ENCODE measurements at regions of chr1 and their contacts with region 1.

Region 1: DNA sequence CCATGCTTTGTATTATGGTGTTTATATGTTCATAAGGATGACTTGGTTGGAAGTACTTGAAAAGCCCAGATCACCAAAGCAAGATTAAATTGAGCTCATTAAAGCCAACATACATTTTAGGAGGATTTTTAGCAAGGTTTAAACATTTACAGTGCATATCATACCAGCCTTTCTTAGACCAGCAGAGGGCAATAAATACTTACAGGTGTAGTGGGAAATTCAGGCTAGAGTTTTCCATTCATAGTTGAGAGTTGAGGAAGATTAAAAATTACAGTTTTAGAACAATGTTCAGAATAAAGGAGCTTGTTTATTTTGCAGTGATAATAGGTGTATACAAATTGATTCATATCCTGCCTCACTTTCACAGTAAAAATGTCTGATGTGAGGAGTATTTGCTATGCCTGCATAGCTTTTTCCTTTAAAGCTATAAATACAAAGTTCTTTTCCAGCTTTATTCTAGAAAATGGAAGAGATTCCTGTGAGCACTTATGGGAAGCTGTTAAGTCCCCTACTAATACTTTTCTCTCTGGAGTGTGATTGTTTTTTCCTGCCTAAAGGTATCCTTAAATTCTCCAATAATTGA is 35.3 kb downstream of the DTL start:
- DNase-seq: peak in 4 of 5 donors; percentile 49 to 55 (median 52)
- H3K4me3 ChIP-seq: no peak overlapping the region
- H3K4me3 Mint-ChIP-seq: no peak overlapping the region
- H3K27ac ChIP-seq: no peak overlapping the region
- H3K27ac Mint-ChIP-seq: no peak overlapping the region
- H3K4me1 ChIP-seq: no peaks in the 10 kb centered on the region
- H3K4me1 Mint-ChIP-seq: peaks cover 0 to 3% (median 1%) of the 10 kb centered on the region in 4 donors
- H3K27me3 ChIP-seq: no peaks in the 10 kb centered on the region
- H3K27me3 Mint-ChIP-seq: no peaks in the 10 kb centered on the region

Region 2: GRCh38 chr1:211680752-211681327 is 390.0 kb before region 1 on chr1:
- CTCF ChIA-PET with region 1: interaction called, 22 read pairs
- POLR2A ChIA-PET with region 1: interaction called, 4 read pairs
- intact Hi-C with region 1: loop called (anchors 1 kb)
- DNase-seq: peak; percentile 76 to 83 (median 82)
- H3K4me3 ChIP-seq: no peak overlapping the region
- H3K4me3 Mint-ChIP-seq: peak overlapping the region in 4 of 8 donors; percentile 0 to 56 (median 17)
- H3K27ac ChIP-seq: peak overlapping the region; percentile 61
- H3K27ac Mint-ChIP-seq: peak overlapping the region; percentile 77 to 98 (median 92)
- H3K4me1 ChIP-seq: peaks cover 15% of the 10 kb centered on the region
- H3K4me1 Mint-ChIP-seq: peaks cover 9 to 26% (median 12%) of the 10 kb centered on the region in 4 donors
- H3K27me3 ChIP-seq: no peaks in the 10 kb centered on the region
- H3K27me3 Mint-ChIP-seq: no peaks in the 10 kb centered on the region

Region 3: DNA sequence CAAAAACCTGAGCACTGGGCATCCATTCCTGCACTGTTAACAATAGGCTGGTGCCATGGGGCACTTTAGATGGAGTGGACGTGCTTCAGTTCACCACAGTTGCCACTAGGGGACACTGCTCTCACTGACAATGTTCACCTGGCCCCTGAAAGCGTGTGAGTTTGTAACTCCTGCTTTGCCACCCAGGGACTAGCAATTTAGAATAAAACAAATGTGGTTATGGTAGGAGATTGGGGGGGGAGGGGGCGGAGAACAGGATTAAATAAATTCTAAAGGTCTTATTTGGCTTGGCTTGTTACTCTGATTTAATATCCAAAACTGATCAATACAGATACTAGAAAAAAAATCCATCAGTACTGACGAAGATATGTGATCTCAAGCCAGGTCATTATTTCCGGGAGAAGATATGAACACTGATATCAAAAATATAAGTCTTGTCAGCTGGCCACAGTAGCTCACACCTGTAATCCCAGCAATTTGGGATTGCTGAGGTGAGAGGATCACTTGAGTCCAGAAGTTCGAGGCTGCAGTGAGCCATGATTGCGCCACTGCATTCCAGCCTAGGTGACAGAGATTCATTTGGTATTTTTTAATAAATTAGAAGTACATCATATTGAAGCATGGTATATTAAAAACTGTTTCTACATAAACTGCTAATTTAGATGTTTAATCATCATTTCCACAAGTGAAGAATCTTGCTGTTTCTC is 58.6 kb before region 1 on chr1:
- CTCF ChIA-PET with region 1: interaction called, 11 read pairs
- POLR2A ChIA-PET with region 1: interaction called, 3 read pairs
- intact Hi-C with region 1: no loop called
- DNase-seq: peak; percentile 42 to 66 (median 53)
- H3K4me3 ChIP-seq: no peak overlapping the region
- H3K4me3 Mint-ChIP-seq: no peak overlapping the region
- H3K27ac ChIP-seq: no peak overlapping the region
- H3K27ac Mint-ChIP-seq: peak overlapping the region in 1 of 7 donors; percentile 3
- H3K4me1 ChIP-seq: no peaks in the 10 kb centered on the region
- H3K4me1 Mint-ChIP-seq: peaks cover 0 to 7% (median 4%) of the 10 kb centered on the region in 4 donors
- H3K27me3 ChIP-seq: no peaks in the 10 kb centered on the region
- H3K27me3 Mint-ChIP-seq: no peaks in the 10 kb centered on the region

Region 4: DNA sequence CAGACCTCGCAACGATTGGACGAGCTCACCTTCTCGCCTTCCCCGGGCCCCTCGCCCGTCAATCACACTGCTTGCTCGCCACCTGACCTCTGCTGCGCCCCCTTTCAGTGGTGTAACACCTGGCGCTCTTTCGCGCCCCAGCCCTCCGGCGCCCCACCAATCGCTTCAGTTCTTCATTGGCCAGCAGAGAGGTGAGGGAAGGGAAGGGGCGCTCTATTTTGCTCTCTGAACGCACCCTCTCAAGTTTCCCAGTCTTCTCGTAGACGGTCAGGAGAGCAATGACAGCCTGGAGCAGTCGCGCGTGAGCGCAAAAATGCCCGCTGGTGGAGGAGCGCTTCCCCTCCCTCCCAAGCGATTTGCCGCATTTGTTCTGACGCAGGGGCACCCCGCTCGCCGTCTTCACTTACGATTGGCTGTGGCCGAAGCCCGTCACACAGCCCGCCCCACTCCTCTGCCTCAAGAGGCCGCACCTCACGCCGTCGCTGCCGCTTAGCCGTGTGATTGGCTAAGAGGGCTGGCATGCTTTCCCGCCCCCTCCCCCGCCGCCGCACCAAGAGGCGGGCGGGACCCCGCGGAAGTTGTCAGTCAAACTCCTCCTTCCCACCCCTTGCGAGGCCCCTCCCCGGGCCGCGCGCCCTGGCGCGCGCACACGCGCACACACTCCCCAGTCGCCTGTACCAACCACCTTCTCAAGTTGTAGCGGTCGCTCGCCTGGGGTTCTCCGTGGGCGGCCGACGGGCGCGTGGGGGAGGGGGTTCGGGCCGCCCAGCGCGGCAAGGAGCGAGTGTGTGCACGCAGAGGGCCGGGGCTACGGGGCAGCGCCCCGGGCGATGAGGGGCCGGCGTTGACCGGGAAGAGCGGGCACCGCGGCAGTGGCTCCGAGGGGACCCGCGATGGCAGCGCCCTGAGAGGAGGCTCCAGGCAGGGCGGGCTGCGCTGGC is 214.2 kb after region 1 on chr1 and contains the start of gene PPP2R5A:
- CTCF ChIA-PET with region 1: interaction called, 162 read pairs
- POLR2A ChIA-PET with region 1: interaction called, 21 read pairs
- intact Hi-C with region 1: no loop called
- DNase-seq: peak; percentile 98 to 99 (median 99)
- H3K4me3 ChIP-seq: peak within 1 kb of the TSS; percentile 85 to 99
- H3K4me3 Mint-ChIP-seq: peak within 1 kb of the TSS; percentile 99 to 100 (median 100)
- H3K27ac ChIP-seq: peak within 1 kb of the TSS; percentile 92
- H3K27ac Mint-ChIP-seq: peak within 1 kb of the TSS; percentile 94 to 99 (median 99)
- H3K4me1 ChIP-seq: peaks cover 34% of the 10 kb centered on the region
- H3K4me1 Mint-ChIP-seq: peaks cover 26 to 49% (median 37%) of the 10 kb centered on the region in 4 donors
- H3K27me3 ChIP-seq: no peaks in the 10 kb centered on the region
- H3K27me3 Mint-ChIP-seq: no peaks in the 10 kb centered on the region
- total RNA-seq, gene PPP2R5A: 53.8 to 55.0 TPM

Region 5: GRCh38 chr1:212315907-212316306 is 245.1 kb after region 1 on chr1:
- CTCF ChIA-PET with region 1: interaction called, 31 read pairs
- POLR2A ChIA-PET with region 1: no interaction called
- intact Hi-C with region 1: no loop called
- DNase-seq: peak in 1 of 5 donors; percentile 4
- H3K4me3 ChIP-seq: no peak overlapping the region
- H3K4me3 Mint-ChIP-seq: peak overlapping the region in 4 of 8 donors; percentile 13 to 64 (median 52)
- H3K27ac ChIP-seq: no peak overlapping the region
- H3K27ac Mint-ChIP-seq: peak overlapping the region in 6 of 7 donors; percentile 4 to 81 (median 56)
- H3K4me1 ChIP-seq: peaks cover 29% of the 10 kb centered on the region
- H3K4me1 Mint-ChIP-seq: peaks cover 28 to 52% (median 42%) of the 10 kb centered on the region in 4 donors
- H3K27me3 ChIP-seq: no peaks in the 10 kb centered on the region
- H3K27me3 Mint-ChIP-seq: no peaks in the 10 kb centered on the region

Region 6: DNA sequence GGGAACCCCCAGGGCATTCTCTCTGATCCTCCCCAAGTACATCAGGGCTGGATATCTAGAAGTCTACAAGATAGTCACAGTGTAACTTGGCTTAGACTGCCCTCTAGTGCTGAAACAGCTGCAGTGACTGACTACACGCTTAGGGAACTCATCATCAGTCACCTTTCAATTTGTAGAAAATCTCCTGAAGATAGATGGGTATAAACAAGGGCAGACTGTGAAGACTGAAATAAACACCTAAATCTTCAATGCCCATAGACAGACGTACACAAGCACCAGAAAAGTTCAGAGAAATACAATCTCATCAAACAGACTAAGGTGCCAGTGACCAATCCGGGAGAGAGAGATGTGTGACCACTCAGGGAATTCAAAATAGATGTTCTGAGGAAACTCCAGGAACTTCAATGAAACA is 297.3 kb after region 1 on chr1:
- CTCF ChIA-PET with region 1: interaction called, 147 read pairs
- POLR2A ChIA-PET with region 1: interaction called, 10 read pairs
- intact Hi-C with region 1: loop called (anchors 1 kb)
- DNase-seq: peak; percentile 53 to 68 (median 57)
- H3K4me3 ChIP-seq: no peak overlapping the region
- H3K4me3 Mint-ChIP-seq: no peak overlapping the region
- H3K27ac ChIP-seq: no peak overlapping the region
- H3K27ac Mint-ChIP-seq: peak overlapping the region in 3 of 7 donors; percentile 10 to 55 (median 41)
- H3K4me1 ChIP-seq: no peaks in the 10 kb centered on the region
- H3K4me1 Mint-ChIP-seq: peaks cover 0 to 7% (median 1%) of the 10 kb centered on the region in 4 donors
- H3K27me3 ChIP-seq: no peaks in the 10 kb centered on the region
- H3K27me3 Mint-ChIP-seq: no peaks in the 10 kb centered on the region

Region 7: DNA sequence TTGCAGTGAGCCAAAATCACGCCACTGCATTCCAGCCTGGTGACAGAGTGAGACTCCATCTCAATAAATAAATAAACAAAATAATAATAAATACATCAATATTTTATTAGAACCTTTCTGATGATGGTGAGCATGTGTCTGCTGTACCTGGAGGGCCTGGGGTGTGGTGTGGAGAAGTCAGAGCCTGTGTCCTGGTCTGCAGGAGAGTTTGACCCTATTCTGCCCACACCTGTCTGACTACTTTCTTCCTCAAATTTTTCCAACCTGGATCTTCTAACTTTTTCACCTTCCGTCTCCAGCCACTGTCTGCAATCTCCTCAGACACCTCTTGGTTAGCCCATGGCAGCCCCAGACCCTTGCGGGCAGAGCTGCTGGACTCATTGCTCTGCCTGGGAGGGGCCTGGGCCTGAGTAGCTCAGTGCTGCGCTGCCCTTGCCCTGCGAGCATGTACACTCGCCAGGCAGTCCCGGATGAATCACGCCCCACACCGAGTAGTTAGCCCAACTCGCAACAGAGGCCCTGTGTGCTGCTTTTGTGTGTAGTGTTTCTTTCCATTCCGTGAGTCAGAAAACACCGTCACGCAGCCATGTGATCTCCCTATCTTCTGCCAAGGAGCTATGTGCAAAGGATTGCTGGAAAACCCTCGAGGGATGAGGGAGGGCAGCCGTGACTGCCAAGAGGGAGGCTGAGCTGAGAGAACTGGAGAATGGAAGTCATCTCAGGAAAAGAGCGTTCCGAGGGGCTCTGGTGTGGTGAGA is 399.1 kb after region 1 on chr1:
- CTCF ChIA-PET with region 1: interaction called, 20 read pairs
- POLR2A ChIA-PET with region 1: no interaction called
- intact Hi-C with region 1: no loop called
- DNase-seq: no peak
- H3K4me3 ChIP-seq: no peak overlapping the region
- H3K4me3 Mint-ChIP-seq: no peak overlapping the region
- H3K27ac ChIP-seq: no peak overlapping the region
- H3K27ac Mint-ChIP-seq: peak overlapping the region in 2 of 7 donors; percentile 32 to 74
- H3K4me1 ChIP-seq: no peaks in the 10 kb centered on the region
- H3K4me1 Mint-ChIP-seq: peaks cover 0 to 2% (median 0%) of the 10 kb centered on the region in 4 donors
- H3K27me3 ChIP-seq: no peaks in the 10 kb centered on the region
- H3K27me3 Mint-ChIP-seq: no peaks in the 10 kb centered on the region

Measured in CD4-positive, alpha-beta memory T cell (primary cell).